Ovary (tissue), 10 donors: ENCODE measurements at regions of chr4 and their contacts with region 1.

Region 1: GRCh38 chr4:88600176-88600838 is 8.0 kb downstream of the HERC3 start:
- DNase-seq: no peak
- H3K4me3 ChIP-seq: peak overlapping the region; percentile 19
- H3K27ac ChIP-seq: no peak overlapping the region
- H3K4me1 ChIP-seq: peaks cover 3% of the 10 kb centered on the region
- H3K27me3 ChIP-seq: no peaks in the 10 kb centered on the region
- CTCF ChIP-seq: no peak
- EP300 ChIP-seq: no peak
- POLR2A ChIP-seq: no peak

Region 2: GRCh38 chr4:88017516-88018297 is 582.6 kb before region 1 on chr4:
- intact Hi-C with region 1: loop called in 1 of 4 experiments (anchors 5 kb)
- DNase-seq: peak in 1 of 5 donors; percentile 42
- H3K4me3 ChIP-seq: no peak overlapping the region
- H3K27ac ChIP-seq: peak overlapping the region; percentile 54 to 76
- H3K4me1 ChIP-seq: peaks cover 19% of the 10 kb centered on the region
- H3K27me3 ChIP-seq: no peaks in the 10 kb centered on the region
- CTCF ChIP-seq: no peak
- EP300 ChIP-seq: peak; percentile 22
- POLR2A ChIP-seq: no peak

Region 3: GRCh38 chr4:88211473-88212252 is 388.6 kb before region 1 on chr4:
- intact Hi-C with region 1: no loop called
- DNase-seq: peak in 2 of 5 donors; percentile 37 to 58
- H3K4me3 ChIP-seq: no peak overlapping the region
- H3K27ac ChIP-seq: no peak overlapping the region
- H3K4me1 ChIP-seq: no peaks in the 10 kb centered on the region
- H3K27me3 ChIP-seq: no peaks in the 10 kb centered on the region
- CTCF ChIP-seq: peak; percentile 59 to 74 (median 66)
- EP300 ChIP-seq: no peak
- POLR2A ChIP-seq: no peak

Region 4: DNA sequence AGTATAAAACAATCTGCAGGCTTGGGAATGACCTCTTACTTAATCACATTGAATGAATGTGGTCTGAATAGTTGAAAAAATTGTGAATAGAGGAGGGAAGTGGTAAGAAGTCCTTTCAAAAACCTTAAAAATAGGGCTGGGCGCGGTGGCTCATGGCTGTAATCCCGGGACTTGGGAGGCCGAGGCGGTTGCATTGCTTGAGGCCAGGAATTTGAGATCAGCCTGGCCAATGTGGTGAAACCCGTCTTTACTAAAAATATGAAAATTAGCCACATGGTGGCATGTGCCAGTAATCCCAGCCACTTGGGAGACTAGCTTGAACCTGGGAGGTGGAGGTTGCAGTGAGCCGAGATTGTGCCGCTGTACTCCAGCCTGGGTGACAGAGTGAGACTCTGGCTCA is 28.5 kb after region 1 on chr4:
- intact Hi-C with region 1: no loop called
- DNase-seq: no peak
- H3K4me3 ChIP-seq: no peak overlapping the region
- H3K27ac ChIP-seq: no peak overlapping the region
- H3K4me1 ChIP-seq: no peaks in the 10 kb centered on the region
- H3K27me3 ChIP-seq: no peaks in the 10 kb centered on the region
- CTCF ChIP-seq: no peak
- EP300 ChIP-seq: no peak
- POLR2A ChIP-seq: no peak

Region 5: DNA sequence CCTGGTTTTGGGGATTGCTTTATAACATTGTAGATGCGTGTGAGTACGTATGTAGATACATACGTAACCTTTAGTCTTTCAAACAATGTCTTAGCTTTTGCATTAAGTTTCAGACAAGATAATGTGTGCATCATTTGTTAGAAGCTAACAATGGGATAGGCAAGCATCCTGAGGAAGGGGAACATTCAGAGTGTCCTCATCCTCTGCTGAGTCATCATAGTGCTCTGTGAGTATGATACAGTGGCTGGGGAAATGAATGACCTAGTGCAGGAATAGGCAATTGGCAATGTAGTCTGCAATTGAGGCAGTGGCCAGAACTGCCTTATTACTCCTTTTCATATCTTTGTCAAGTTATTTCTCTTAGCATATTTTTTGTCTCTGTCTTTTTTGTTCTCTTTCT is 90.0 kb after region 1 on chr4:
- intact Hi-C with region 1: no loop called
- DNase-seq: no peak
- H3K4me3 ChIP-seq: no peak overlapping the region
- H3K27ac ChIP-seq: no peak overlapping the region
- H3K4me1 ChIP-seq: no peaks in the 10 kb centered on the region
- H3K27me3 ChIP-seq: no peaks in the 10 kb centered on the region
- CTCF ChIP-seq: no peak
- EP300 ChIP-seq: no peak
- POLR2A ChIP-seq: no peak

Region 6: GRCh38 chr4:88759039-88759894 is 159.0 kb after region 1 on chr4:
- intact Hi-C with region 1: no loop called
- DNase-seq: no peak
- H3K4me3 ChIP-seq: no peak overlapping the region
- H3K27ac ChIP-seq: no peak overlapping the region
- H3K4me1 ChIP-seq: no peaks in the 10 kb centered on the region
- H3K27me3 ChIP-seq: no peaks in the 10 kb centered on the region
- CTCF ChIP-seq: no peak
- EP300 ChIP-seq: no peak
- POLR2A ChIP-seq: no peak